ENCODE measurements at regions of chr2 and their contacts with region 1.

Region 1: GRCh38 chr2:172427256-172427989 is at the start of gene ITGA6:
- DNase-seq: peak; percentile 90
- total RNA-seq, gene ITGA6: 38.9 TPM

Region 2: DNA sequence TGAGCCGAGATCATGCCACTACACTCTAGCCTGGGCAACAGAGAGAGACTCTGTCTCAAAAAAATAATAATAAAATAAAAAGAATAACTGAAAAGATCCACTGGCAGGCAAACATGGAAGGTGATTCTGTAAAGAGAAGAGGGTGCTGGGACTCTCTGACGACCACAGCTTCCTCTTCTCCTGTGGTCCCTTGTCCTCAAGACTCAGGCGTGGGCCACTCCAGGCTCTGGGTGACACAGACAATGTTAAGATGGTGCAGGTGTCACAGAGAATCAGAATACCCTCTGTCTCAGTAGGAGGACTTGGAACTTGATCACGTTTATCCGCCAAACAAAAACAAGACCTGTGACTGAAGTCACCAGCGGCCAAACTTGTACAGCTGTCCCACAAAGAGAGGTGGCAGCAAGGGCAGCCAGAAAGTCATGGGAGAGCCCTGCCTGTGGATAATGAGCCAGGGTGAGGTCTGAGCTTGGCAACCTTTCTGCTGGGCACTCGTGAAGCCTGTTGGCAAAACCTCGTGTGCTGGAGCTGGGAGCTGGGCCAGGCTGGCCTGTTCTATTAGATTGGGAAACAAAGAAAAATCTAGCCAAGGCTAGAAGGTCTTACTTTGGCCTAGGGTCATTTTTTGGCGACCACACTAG is 76.5 kb before region 1 on chr2:
- intact Hi-C with region 1: loop called (anchors 5 kb)
- DNase-seq: peak; percentile 81

Region 3: GRCh38 chr2:172404824-172405223 is 22.6 kb before region 1 on chr2:
- intact Hi-C with region 1: loop called (anchors 1 kb)
- DNase-seq: no peak